H1 (cell line): ENCODE measurements at regions of chr1 and their contacts with region 1.

Region 1: DNA sequence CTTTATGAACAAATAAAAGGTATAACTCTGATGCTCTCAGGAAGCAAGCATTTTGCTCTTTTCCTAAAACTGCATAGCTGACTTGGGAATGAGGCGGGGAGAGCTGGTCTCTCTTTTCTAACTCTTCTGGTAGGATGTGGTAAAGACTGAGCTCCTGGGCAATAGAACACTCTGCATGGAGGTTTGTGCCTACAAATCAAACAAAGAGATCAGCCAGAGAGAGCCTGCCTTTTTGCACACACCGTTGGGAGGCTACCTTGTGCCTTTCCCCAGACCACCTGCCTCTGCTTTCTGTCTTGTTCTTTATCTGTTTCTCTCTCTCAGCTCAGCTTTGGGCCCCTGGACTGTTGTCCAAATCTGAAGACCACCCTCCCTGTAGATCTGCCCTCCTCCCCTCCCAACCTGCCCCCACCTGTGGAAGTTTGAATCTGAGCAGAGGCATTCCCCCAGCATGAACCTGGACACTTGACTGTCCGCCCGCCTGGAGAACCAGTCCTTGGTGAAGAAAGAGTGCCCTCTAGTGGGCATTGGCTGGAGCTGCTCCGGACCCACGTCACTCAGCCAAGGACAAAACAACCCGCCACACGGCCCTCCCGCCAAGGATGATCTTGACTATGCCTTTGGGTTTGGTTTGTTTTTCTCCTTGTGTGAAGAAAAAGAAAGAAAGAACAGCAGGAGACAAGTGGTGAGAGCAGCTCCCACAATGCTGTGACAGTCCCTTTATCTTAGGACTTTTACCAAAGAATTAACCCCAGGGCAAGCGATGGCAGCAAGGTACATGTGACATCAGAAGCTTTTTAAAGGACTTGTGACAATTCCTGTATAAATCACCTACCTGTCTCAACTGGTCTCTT is 228.2 kb downstream of the PBX1 start:
- DNase-seq: peak; percentile 78 to 89
- H3K4me3 ChIP-seq: peak overlapping the region in 1 of 4 experiments; percentile 14; a peak in 1 of 8 replicates
- H3K27ac ChIP-seq: peak overlapping the region; percentile 48; the same call in 1 of the 2 replicates
- H3K4me1 ChIP-seq: peaks cover 0 to 15% (median 5%) of the 10 kb centered on the region in 4 experiments; a peak in 5 of 7 replicates
- H3K27me3 ChIP-seq: no peaks in the 10 kb centered on the region
- CTCF ChIP-seq: peak; percentile 78 to 93 (median 90)
- EP300 ChIP-seq: no peak
- POLR2A ChIP-seq: no peak
- RAD21 ChIP-seq: peak; percentile 93

Region 2: DNA sequence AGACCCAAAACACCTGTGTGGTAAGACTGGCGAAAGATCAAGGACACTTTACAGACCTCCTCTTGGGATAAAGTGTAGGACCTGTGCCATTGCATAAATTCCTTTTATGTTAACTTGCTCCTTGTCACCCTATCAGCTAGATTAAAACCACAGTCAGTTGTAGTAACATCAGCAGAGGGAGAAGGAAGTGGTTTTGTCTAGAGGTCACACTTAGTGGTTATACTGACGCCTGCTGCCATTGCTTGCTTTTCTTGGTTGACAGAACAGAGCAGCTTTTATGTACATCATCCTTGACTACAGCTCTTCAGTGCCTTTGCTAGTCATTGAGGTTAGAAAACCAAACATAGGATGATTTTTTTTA is 126.8 kb before region 1 on chr1:
- CTCF ChIA-PET with region 1: interaction called, 12 read pairs
- POLR2A ChIA-PET with region 1: no interaction called
- DNase-seq: no peak
- H3K4me3 ChIP-seq: no peak overlapping the region
- H3K27ac ChIP-seq: no peak overlapping the region
- H3K4me1 ChIP-seq: peaks cover 6 to 17% (median 16%) of the 10 kb centered on the region in 4 experiments; a peak in 6 of 7 replicates
- H3K27me3 ChIP-seq: no peaks in the 10 kb centered on the region
- CTCF ChIP-seq: no peak
- EP300 ChIP-seq: no peak
- POLR2A ChIP-seq: no peak; a peak in 1 of 3 replicates
- RAD21 ChIP-seq: no peak

Region 3: GRCh38 chr1:164689672-164690598 is 97.3 kb before region 1 on chr1:
- CTCF ChIA-PET with region 1: interaction called, 10 read pairs
- POLR2A ChIA-PET with region 1: no interaction called
- DNase-seq: no peak
- H3K4me3 ChIP-seq: 0 out of 8 replicates have a peak overlapping the region, but pooled peaks of 1 of the 4 experiments have one; percentile 2
- H3K27ac ChIP-seq: 0 out of 2 replicates have a peak overlapping the region, but pooled peaks have one; percentile 22
- H3K4me1 ChIP-seq: peaks cover 0 to 7% (median 2%) of the 10 kb centered on the region in 4 experiments; a peak in 4 of 7 replicates
- H3K27me3 ChIP-seq: no peaks in the 10 kb centered on the region
- CTCF ChIP-seq: no peak
- EP300 ChIP-seq: no peak
- POLR2A ChIP-seq: no peak
- RAD21 ChIP-seq: no peak

Region 4: DNA sequence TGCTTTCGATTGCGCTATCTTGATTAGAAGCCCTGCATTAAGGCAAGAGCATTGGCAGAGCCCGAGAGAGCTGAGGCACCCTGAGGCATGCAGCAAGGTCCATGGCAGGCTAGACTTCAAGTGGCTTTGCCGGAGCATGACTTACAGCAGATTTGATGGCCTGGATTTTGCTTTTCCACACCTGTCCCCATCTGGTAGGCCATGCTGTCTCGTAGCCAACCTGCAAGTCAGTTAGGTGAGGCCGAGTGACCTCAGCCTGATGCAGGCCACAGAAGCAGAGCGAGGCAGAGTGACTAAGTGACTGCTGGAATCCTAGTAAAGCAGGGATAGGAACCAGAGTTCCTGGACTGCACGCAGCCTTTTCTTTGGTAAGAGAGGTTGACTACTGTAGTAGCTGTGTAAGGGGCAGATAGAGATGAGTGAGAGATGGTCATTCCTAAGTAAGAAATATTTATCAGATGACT is 79.3 kb before region 1 on chr1:
- CTCF ChIA-PET with region 1: interaction called, 64 read pairs
- POLR2A ChIA-PET with region 1: no interaction called
- DNase-seq: no peak
- H3K4me3 ChIP-seq: no peak overlapping the region
- H3K27ac ChIP-seq: peak overlapping the region; percentile 21
- H3K4me1 ChIP-seq: peaks cover 11 to 27% (median 23%) of the 10 kb centered on the region in 4 experiments
- H3K27me3 ChIP-seq: no peaks in the 10 kb centered on the region
- CTCF ChIP-seq: no peak
- EP300 ChIP-seq: no peak
- POLR2A ChIP-seq: no peak
- RAD21 ChIP-seq: no peak

Region 5: GRCh38 chr1:164725401-164725800 is 61.8 kb before region 1 on chr1:
- CTCF ChIA-PET with region 1: no interaction called
- POLR2A ChIA-PET with region 1: no interaction called
- DNase-seq: no peak
- H3K4me3 ChIP-seq: no peak overlapping the region
- H3K27ac ChIP-seq: no peak overlapping the region
- H3K4me1 ChIP-seq: peaks cover 5 to 22% (median 12%) of the 10 kb centered on the region in 4 experiments
- H3K27me3 ChIP-seq: no peaks in the 10 kb centered on the region
- CTCF ChIP-seq: no peak
- EP300 ChIP-seq: no peak
- POLR2A ChIP-seq: no peak
- RAD21 ChIP-seq: no peak

Region 6: GRCh38 chr1:164743976-164744375 is 43.2 kb before region 1 on chr1:
- CTCF ChIA-PET with region 1: no interaction called
- POLR2A ChIA-PET with region 1: no interaction called
- DNase-seq: no peak
- H3K4me3 ChIP-seq: no peak overlapping the region
- H3K27ac ChIP-seq: no peak overlapping the region
- H3K4me1 ChIP-seq: peaks cover 0 to 2% (median 0%) of the 10 kb centered on the region in 4 experiments; a peak in 2 of 7 replicates
- H3K27me3 ChIP-seq: no peaks in the 10 kb centered on the region
- CTCF ChIP-seq: no peak
- EP300 ChIP-seq: no peak
- POLR2A ChIP-seq: no peak
- RAD21 ChIP-seq: no peak

Region 7: DNA sequence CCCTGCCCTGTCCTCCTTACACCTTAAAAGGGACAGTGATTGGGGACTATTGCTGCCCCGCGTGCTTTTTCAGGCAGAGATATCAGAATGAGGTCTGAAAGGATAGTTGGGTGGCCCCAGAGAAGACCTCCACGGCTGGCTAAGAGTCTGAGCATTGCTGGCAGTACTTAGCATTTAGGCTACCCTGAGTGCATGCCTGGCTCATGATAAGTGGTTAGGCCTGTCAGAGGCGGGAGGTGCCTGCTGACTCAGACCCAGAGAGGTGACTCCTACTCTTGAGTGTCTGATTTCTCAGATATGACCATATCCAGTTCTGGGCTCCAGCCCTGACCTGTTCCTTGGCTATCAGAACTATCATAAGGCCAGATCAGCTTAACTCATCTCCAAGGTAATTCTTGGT is 14.6 kb before region 1 on chr1:
- CTCF ChIA-PET with region 1: interaction called, 88 read pairs
- POLR2A ChIA-PET with region 1: interaction called, 6 read pairs
- DNase-seq: no peak
- H3K4me3 ChIP-seq: no peak overlapping the region
- H3K27ac ChIP-seq: peak overlapping the region; percentile 25; the same call in 1 of the 2 replicates
- H3K4me1 ChIP-seq: peaks cover 3 to 25% (median 13%) of the 10 kb centered on the region in 4 experiments; a peak in 6 of 7 replicates
- H3K27me3 ChIP-seq: no peaks in the 10 kb centered on the region
- CTCF ChIP-seq: no peak
- EP300 ChIP-seq: no peak
- POLR2A ChIP-seq: no peak
- RAD21 ChIP-seq: no peak

Region 8: GRCh38 chr1:165073185-165074007 is 286.2 kb after region 1 on chr1:
- CTCF ChIA-PET with region 1: interaction called, 10 read pairs
- POLR2A ChIA-PET with region 1: no interaction called
- DNase-seq: no peak
- H3K4me3 ChIP-seq: no peak overlapping the region
- H3K27ac ChIP-seq: no peak overlapping the region
- H3K4me1 ChIP-seq: peaks cover 0 to 9% (median 4%) of the 10 kb centered on the region in 4 experiments; a peak in 3 of 7 replicates
- H3K27me3 ChIP-seq: no peaks in the 10 kb centered on the region; a peak in 1 of 7 replicates
- CTCF ChIP-seq: peak in 2 of 3 experiments; percentile 68 to 73; a peak in 3 of 4 replicates
- EP300 ChIP-seq: no peak
- POLR2A ChIP-seq: no peak
- RAD21 ChIP-seq: peak; percentile 93 to 95